Activated CD4-positive, alpha-beta T cell treated with anti-CD3 and anti-CD28 coated beads for 36 hours (primary cell): ENCODE measurements at regions of chr17 and their contacts with region 1.

Region 1: DNA sequence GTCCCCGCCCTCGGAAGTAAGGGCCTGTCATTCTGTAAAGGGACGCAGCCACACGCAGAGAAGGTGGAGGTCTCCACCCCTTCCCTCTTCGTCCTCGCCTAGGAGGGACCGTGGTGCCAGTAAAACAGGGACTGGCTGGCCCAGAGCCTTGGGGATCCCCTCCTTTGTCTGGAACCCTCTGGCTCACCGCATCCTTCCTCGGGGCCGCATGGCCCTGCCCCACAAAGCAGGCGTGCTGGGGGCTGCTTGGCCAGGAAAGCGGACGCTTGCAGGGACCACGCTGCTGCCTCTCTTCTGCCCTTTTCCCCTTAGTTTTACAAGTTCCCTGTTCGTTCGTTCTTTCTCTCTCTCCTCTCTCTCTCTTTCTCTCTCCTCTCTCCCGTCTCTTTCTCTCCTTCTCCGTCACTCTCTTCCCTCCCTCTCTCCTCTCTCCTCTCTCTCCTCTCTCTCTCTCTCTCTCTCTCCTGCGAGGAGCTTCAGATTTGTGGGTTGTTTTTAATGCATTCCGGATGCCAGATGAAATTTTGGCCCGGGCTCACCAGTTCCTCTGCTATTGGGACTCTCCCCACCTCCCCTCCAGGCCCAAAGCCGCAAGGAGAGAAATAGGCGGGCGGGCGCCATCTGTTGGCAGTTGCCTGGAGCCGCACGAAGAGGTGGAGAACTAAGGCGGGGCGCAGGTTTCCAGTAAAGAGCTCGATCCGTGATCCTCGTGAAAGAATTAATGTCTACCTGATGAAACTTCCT is 35.1 kb upstream of the CDRT4 start:
- DNase-seq: peak; percentile 90
- ATAC-seq: peak; percentile 95
- H3K4me3 Mint-ChIP-seq: no peak overlapping the region
- H3K27ac Mint-ChIP-seq: no peak overlapping the region
- H3K4me1 Mint-ChIP-seq: peaks cover 5% of the 10 kb centered on the region
- H3K27me3 Mint-ChIP-seq: no peaks in the 10 kb centered on the region

Region 2: GRCh38 chr17:15233022-15233805 is 269.3 kb before region 1 on chr17:
- CTCF ChIA-PET with region 1: interaction called, 10 read pairs
- POLR2A ChIA-PET with region 1: no interaction called
- intact Hi-C with region 1: no loop called
- DNase-seq: peak; percentile 24
- ATAC-seq: peak; percentile 91
- H3K4me3 Mint-ChIP-seq: no peak overlapping the region
- H3K27ac Mint-ChIP-seq: no peak overlapping the region
- H3K4me1 Mint-ChIP-seq: peaks cover 5% of the 10 kb centered on the region
- H3K27me3 Mint-ChIP-seq: no peaks in the 10 kb centered on the region

Region 3: DNA sequence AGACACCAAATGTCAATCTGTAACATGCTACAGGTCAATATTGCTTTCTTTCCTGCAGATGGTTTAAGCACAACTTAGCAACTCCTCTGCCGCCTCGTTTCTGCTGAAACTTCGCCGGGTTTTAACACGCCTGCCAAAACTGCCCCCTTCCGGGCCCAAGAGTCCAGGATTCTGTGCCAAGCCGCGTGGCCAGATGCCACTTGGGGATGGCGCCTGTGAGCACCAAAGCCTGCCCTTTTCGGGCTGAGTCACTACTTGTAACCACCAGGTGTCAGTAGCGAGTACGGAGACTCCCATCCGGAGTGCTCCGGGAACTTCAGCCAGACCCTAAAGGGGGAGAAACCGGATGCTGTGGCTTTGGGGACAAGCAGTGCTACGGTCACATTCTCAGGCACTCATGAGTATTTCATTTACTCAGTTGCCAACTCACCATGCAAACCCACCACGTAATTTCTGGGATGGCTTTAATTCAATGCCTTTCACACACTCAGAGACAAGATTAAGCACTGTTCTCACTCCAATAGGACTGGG is 245.2 kb before region 1 on chr17:
- CTCF ChIA-PET with region 1: interaction called, 52 read pairs
- POLR2A ChIA-PET with region 1: no interaction called
- intact Hi-C with region 1: loop called (anchors 1 kb)
- DNase-seq: peak; percentile 73
- ATAC-seq: peak; percentile 62
- H3K4me3 Mint-ChIP-seq: no peak overlapping the region
- H3K27ac Mint-ChIP-seq: no peak overlapping the region
- H3K4me1 Mint-ChIP-seq: peaks cover 15% of the 10 kb centered on the region
- H3K27me3 Mint-ChIP-seq: peaks cover 59% of the 10 kb centered on the region

Region 4: DNA sequence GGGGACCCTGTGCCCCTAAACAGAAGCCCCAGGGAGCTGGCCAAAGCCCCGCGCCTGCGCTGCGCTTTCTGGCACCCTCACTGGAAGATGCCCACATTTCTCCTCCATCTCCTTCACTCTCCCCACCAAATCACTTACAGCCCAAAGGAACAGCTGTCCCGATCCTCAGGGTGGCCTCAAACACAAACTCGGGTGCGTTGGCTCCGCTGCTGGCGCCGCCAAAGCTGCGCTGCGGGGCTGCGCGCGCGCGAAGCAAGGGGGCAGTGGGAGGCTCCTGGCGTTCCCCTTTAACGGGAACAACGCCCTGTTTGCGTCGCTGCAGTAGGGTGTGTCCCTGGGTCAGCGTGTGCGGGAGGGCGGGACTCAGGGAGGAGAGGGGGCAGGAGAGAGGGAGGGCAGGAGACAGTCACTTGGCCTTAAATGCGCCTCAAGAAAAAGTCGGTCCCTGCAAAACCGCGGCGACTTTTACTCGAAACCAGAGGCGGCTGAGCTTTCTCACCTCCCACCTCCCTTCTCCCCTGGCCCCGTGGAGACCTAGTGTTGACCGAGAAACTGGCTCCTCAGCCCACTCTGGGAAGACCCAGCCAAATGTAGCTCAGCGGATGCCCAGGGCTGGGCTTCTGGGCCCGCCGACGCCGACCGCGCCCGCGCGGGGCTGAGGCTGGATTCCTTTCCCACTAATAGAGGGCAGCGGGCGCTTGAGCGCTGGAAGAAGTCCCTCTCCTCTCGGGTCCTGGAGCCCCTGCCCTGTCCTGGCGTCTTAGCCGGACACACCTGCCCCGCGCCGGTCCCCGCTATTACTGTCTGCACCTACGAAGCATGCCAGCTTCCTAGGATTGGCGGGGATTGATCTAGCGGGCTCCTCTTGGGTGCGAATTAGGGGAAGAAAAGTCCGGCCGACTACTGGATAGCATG is 240.0 kb before region 1 on chr17:
- CTCF ChIA-PET with region 1: interaction called, 52 read pairs
- POLR2A ChIA-PET with region 1: no interaction called
- intact Hi-C with region 1: loop called (anchors 1 kb)
- DNase-seq: no peak
- ATAC-seq: no peak
- H3K4me3 Mint-ChIP-seq: no peak overlapping the region
- H3K27ac Mint-ChIP-seq: no peak overlapping the region
- H3K4me1 Mint-ChIP-seq: peaks cover 7% of the 10 kb centered on the region
- H3K27me3 Mint-ChIP-seq: peaks cover 70% of the 10 kb centered on the region

Region 5: DNA sequence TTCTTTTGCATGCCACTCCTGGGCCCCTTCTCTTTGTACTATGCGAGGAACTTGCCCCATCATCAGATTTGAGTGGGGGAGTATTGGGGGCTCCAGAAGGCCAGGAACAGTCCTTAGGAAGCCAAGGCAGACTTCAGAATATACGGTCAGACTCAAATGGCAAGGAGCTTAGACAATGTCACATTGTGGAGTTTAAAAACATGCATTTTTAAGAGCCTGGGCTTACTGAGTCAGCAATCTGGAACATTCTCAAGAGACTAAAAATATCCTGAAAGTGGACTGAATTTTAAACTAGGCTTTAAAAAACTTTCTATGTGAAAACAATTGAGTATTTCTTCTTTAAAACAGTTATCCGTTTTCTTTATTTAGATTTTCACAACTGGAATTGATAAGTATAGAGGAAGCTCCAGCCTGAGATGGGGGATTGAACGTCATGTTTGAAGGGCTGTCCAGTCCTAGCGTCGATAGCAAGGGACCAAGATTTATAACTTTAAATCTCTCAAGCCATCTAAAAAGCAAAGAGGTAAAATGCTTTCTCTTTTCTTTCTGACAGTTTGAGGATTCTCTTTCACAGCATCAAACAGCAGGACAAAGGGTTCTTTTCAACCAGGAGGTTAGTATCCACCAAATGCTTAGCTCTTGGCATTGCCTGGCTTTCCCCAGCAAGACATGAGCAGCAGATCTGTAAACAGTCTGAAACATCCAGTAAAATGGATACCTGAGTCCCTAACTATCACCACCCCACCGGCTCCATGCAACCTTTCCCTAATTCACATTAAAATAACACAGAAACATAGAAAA is 10.7 kb after region 1 on chr17:
- CTCF ChIA-PET with region 1: interaction called, 13 read pairs
- POLR2A ChIA-PET with region 1: no interaction called
- intact Hi-C with region 1: no loop called
- DNase-seq: no peak
- ATAC-seq: no peak
- H3K4me3 Mint-ChIP-seq: no peak overlapping the region
- H3K27ac Mint-ChIP-seq: no peak overlapping the region
- H3K4me1 Mint-ChIP-seq: no peaks in the 10 kb centered on the region
- H3K27me3 Mint-ChIP-seq: no peaks in the 10 kb centered on the region